ENCODE measurements at regions of chr2 and their contacts with region 1.

Region 1: DNA sequence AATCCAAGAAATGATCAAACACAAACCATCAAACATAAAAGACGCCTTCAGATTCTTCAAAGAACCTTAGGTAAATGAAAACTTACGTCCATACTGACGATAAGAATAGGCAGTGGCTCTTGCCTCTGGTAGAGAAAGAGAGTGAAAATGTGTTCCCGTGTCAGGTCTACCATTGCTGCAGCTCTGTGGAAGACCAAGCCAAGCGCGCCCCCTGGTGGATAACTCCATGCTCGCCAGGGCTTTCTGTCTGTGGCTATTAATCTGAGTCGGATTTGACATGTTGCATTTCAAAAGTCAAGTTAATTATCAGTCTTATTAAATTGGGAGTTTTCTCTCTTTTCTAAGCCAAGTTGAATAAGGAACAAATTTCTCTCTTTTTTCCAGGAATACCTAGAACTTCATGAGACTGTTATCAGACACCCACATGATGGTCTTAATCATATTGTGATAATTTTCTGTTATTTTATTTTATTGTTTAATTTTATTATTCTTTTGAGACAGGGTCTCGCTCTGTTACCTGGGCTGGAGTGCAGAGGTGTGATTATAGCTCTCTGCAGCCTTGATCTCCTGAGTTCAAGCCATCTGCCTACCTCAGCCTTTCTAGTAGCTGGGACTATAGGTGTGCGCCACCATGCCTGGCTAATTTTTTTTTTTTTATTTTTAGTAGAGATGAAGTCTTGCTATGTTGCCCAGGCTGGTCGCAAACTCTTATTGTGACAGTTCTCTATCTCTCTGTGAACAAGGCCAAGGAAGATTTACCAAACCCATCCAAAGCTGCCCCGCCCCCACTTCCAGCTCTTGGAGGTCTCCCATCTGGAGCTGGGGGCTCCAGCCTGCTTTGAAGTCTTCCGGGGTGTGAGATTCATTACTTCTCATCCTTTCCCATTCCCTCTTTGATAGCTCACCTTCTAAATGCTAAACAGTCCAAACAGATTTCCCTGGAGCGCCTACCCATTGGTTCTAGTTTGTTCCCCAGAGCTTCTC is 15.8 kb upstream of the ZAP70 start:
- DNase-seq: peak; percentile 97
- ATAC-seq: peak; percentile 92
- H3K4me3 Mint-ChIP-seq: no peak overlapping the region
- H3K27ac Mint-ChIP-seq: peak overlapping the region; percentile 1
- H3K4me1 Mint-ChIP-seq: peaks cover 11% of the 10 kb centered on the region
- H3K27me3 Mint-ChIP-seq: no peaks in the 10 kb centered on the region

Region 2: DNA sequence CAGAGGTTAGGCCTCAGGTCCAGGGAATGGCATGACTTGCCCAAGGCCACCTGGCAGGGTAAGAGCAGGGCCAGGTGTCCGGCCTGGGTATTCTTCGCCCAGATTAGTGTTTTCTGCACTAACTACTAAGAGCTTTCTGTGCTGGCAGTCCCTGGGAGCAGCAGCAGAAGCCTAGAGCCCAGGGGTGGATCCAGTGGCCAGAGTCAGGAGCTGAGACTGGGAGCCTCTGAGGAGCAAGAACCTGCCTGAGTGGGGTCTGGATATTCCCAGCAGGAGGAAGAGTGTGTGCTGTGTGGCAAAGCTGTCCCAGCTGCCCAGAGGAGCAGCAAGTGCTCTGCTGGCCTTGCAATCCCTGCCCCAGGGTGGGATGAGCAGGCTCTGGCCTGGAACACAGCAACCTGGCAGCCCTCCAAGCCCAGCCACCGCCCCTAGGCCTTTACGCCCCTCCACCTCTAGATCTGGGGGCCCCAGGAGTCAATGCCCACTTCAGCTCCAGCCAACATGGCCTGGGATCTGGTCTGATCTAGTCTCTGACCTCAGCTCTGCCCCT is 1632.1 kb before region 1 on chr2:
- CTCF ChIA-PET with region 1: no interaction called
- POLR2A ChIA-PET with region 1: no interaction called
- intact Hi-C with region 1: loop called in 1 of 2 experiments (anchors 10 kb)
- DNase-seq: no peak
- ATAC-seq: no peak
- H3K4me3 Mint-ChIP-seq: no peak overlapping the region
- H3K27ac Mint-ChIP-seq: no peak overlapping the region
- H3K4me1 Mint-ChIP-seq: peaks cover 5% of the 10 kb centered on the region
- H3K27me3 Mint-ChIP-seq: no peaks in the 10 kb centered on the region

Region 3: DNA sequence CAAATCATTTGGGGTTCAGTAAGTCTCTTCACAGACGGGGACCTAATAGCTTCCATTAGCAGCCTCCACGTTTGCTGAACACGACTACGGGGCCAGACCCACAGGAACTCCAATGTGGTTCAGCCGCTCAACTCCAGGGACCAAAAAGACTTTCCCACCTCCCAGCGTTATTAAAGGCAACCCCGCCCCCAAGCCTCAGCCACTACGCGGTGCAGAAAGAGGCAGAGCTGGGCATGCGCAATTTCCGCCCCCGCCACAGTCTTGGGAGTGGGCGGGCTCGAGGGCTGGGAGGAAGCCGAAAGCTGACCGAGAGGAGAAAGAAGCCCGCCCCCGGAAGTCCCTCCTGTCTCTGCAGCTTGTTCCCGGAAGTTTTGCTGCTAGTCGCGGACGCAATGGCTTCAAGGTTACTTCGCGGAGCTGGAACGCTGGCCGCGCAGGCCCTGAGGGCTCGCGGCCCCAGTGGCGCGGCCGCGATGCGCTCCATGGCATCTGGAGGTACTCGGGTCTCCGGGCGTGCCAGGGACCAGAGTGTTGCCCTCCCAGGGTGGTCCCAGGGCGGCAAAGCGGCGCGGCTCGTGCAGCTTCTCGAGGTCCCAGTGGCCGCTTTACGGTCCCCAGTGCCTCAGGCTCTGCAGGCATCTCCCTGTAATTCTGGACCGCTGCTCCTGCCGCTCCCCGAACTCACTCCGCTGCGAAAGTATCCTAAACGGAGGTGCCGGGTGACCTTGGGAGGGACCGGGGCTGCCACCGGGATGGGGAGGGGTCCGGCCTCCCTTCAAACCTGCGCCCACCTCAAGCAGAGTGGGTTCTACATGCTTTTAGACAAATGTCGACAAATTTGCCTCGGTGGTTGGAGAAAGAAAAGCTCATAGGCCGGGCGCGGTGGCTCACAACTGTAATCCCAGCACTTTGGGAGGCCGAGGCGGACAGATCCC is 51.6 kb before region 1 on chr2 and contains the start of gene COX5B:
- CTCF ChIA-PET with region 1: interaction called, 14 read pairs
- POLR2A ChIA-PET with region 1: interaction called, 6 read pairs
- intact Hi-C with region 1: loop called (anchors 1 to 5 kb)
- DNase-seq: peak; percentile 99
- ATAC-seq: peak; percentile 96
- H3K4me3 Mint-ChIP-seq: peak within 1 kb of the TSS; percentile 87
- H3K27ac Mint-ChIP-seq: peak within 1 kb of the TSS; percentile 98
- H3K4me1 Mint-ChIP-seq: peaks cover 14% of the 10 kb centered on the region
- H3K27me3 Mint-ChIP-seq: no peaks in the 10 kb centered on the region
- total RNA-seq, gene COX5B: 189 to 220 TPM

Region 4: DNA sequence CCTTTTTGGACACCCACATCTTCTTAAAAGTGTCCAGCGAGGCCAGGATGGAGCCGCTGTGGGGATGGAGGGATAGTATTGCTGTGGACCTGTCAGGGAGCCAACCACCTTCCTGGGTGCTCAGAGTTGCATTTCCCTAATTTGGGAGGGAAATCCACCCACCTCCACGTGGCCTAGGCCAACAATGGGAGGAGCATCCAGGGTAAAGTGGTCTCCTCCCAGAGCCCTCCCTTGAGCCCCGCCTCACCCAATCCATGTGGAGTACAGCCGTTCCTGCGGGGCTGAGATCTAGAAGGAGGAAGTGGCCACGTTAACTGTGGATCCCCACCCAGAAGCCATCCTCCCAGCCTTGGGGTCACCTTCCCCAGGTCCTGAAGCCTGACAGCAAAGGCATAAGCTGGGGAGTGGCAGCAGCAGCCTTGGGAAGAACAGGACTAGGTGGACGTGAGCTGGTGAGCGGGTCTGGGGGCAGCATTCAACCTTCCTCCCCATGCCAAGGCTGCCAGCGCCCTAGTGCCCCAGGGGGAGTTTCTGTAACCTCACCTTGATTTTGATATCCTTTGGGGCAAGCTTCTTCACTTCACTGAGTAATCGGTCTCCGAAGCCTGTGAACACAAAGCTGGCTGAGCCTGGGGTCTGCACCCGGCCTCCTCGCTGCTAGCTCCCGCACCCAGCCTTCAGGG is 40.5 kb before region 1 on chr2:
- CTCF ChIA-PET with region 1: interaction called, 95 read pairs
- POLR2A ChIA-PET with region 1: no interaction called
- intact Hi-C with region 1: no loop called
- DNase-seq: no peak
- ATAC-seq: no peak
- H3K4me3 Mint-ChIP-seq: no peak overlapping the region
- H3K27ac Mint-ChIP-seq: no peak overlapping the region
- H3K4me1 Mint-ChIP-seq: peaks cover 29% of the 10 kb centered on the region
- H3K27me3 Mint-ChIP-seq: no peaks in the 10 kb centered on the region

Region 5: GRCh38 chr2:97718051-97718882 is 20.7 kb after region 1 on chr2:
- CTCF ChIA-PET with region 1: interaction called, 162 read pairs
- POLR2A ChIA-PET with region 1: interaction called, 5 read pairs
- intact Hi-C with region 1: no loop called
- DNase-seq: peak; percentile 86
- ATAC-seq: peak; percentile 77
- H3K4me3 Mint-ChIP-seq: peak overlapping the region; percentile 71
- H3K27ac Mint-ChIP-seq: peak overlapping the region; percentile 95
- H3K4me1 Mint-ChIP-seq: peaks cover 68% of the 10 kb centered on the region
- H3K27me3 Mint-ChIP-seq: no peaks in the 10 kb centered on the region

Region 6: DNA sequence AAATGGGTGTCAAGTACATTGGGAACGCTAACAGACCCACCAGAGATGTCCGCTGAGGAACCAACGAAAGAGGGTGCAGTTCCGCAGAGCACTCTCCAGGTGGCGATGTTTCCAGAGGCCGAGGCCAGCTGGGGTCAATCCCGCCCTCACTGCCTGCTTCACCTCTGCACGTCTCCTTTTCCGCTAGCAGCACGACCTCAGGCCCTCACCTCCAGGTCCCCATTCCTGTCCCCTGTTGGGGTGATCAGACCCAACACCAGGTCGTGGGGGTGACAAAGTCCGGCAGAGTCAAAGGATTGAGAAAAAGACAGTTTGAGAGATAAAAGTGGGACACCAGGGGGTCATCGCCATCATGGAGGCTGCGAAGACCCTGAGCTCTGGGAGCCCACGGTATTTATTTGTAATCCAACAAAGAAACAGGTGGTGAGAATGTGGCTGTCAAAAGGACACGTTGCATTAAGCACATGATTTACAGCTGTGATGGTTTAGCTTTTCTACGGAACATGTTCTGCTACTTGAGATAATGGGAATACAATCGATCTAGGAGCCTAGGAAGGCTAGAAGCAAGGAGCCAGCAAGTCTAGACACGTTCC is 43.1 kb after region 1 on chr2:
- CTCF ChIA-PET with region 1: interaction called, 29 read pairs
- POLR2A ChIA-PET with region 1: no interaction called
- intact Hi-C with region 1: no loop called
- DNase-seq: peak; percentile 73
- ATAC-seq: peak; percentile 25
- H3K4me3 Mint-ChIP-seq: no peak overlapping the region
- H3K27ac Mint-ChIP-seq: peak overlapping the region; percentile 59
- H3K4me1 Mint-ChIP-seq: peaks cover 43% of the 10 kb centered on the region
- H3K27me3 Mint-ChIP-seq: no peaks in the 10 kb centered on the region

Region 7: GRCh38 chr2:97751752-97752151 is 54.2 kb after region 1 on chr2:
- CTCF ChIA-PET with region 1: interaction called, 20 read pairs
- POLR2A ChIA-PET with region 1: no interaction called
- intact Hi-C with region 1: loop called in 1 of 2 experiments (anchors 2 kb)
- DNase-seq: no peak
- ATAC-seq: no peak
- H3K4me3 Mint-ChIP-seq: no peak overlapping the region
- H3K27ac Mint-ChIP-seq: no peak overlapping the region
- H3K4me1 Mint-ChIP-seq: peaks cover 14% of the 10 kb centered on the region
- H3K27me3 Mint-ChIP-seq: no peaks in the 10 kb centered on the region